ENCODE measurements at regions of chr6 and their contacts with region 1.

Region 1: GRCh38 chr6:140441256-140441655 is 1066.8 kb upstream of the CITED2 start:
- DNase-seq: peak; percentile 60 to 77 (median 73)
- ATAC-seq: peak; percentile 71 to 98 (median 96)
- H3K4me3 ChIP-seq: no peak overlapping the region
- H3K27ac ChIP-seq: peak overlapping the region in 10 of 12 donors; percentile 14 to 70 (median 36)
- H3K4me1 ChIP-seq: peaks cover 0 to 36% (median 15%) of the 10 kb centered on the region in 12 donors
- H3K27me3 ChIP-seq: no peaks in the 10 kb centered on the region
- CTCF ChIP-seq: peak; percentile 39 to 77 (median 66)
- POLR2A ChIP-seq: no peak

Region 2: DNA sequence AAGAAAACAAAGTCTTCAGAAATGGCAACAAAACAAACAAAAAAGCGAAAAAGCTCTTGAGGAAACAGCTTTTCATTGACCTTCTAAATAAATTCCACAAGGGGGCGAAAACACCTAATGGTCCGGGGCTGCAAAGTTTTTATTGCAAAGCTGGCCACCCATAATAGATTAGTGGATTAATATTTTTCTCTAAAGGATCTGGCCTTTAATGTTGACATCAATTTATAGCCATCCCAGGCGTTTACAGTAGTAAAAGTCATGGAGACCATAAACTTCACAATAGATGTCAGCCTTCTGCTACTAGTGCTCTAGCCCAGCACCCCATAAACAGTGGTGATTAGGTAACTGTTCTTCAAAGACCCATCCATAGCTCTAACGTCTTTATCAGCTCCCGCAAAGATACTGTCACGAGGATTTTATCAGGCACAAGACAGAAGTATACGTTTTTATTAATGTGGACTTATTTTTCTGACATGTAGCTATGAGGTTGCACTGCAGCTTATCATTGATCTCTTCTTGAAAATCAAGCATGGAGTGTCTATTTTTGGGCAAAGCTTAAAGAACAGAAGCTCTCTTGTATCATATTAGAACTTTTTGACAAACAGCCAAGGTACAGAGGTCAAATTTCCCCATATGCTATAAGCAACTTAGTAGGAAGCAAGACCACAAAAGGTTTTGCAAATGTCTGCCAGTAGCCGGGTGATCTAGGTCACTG is 1071.5 kb before region 1 on chr6:
- intact Hi-C with region 1: loop called (anchors 1 to 5 kb)
- DNase-seq: no peak
- ATAC-seq: no peak
- H3K4me3 ChIP-seq: peak overlapping the region in 8 of 12 donors; percentile 5 to 98 (median 92)
- H3K27ac ChIP-seq: peak overlapping the region; percentile 61 to 100 (median 97)
- H3K4me1 ChIP-seq: peaks cover 2 to 47% (median 34%) of the 10 kb centered on the region in 12 donors
- H3K27me3 ChIP-seq: no peaks in the 10 kb centered on the region
- CTCF ChIP-seq: peak; percentile 70 to 83 (median 76)
- POLR2A ChIP-seq: no peak

Region 3: DNA sequence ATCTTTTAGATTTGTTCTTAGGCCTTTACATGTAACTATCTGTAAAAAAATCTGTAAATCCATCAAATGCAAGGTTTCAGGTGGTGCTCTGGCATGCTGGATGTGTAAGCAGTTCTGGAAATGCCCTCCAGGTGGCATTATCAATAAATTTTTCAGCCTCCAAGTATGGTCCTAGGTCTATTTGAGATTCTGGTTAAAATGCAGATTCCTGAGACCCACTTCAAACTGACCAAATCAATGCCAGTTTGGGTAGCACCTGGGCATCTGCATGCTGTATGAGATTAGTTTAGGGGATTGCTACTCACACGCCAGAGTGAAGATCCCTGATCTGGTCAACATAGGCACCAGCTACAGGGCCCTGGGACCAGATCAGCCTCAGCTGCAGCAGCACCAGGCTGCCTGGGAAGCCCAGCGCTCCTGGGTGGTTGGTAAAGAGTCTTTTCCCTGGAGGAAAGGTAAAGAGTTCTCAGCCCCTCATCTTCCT is 559.5 kb before region 1 on chr6:
- intact Hi-C with region 1: loop called in 9 of 10 experiments (anchors 2 to 10 kb)
- DNase-seq: no peak
- ATAC-seq: peak; percentile 68 to 77 (median 72)
- H3K4me3 ChIP-seq: peak overlapping the region in 1 of 12 donors; percentile 4
- H3K27ac ChIP-seq: peak overlapping the region in 11 of 12 donors; percentile 55 to 87 (median 73)
- H3K4me1 ChIP-seq: peaks cover 3 to 36% (median 18%) of the 10 kb centered on the region in 12 donors
- H3K27me3 ChIP-seq: no peaks in the 10 kb centered on the region
- CTCF ChIP-seq: peak; percentile 38 to 67 (median 59)
- POLR2A ChIP-seq: no peak

Region 4: GRCh38 chr6:139973669-139974344 is 467.4 kb before region 1 on chr6:
- intact Hi-C with region 1: loop called in 3 of 10 experiments (anchors 2 to 10 kb)
- DNase-seq: no peak
- ATAC-seq: peak; percentile 86 to 94 (median 89)
- H3K4me3 ChIP-seq: no peak overlapping the region
- H3K27ac ChIP-seq: peak overlapping the region; percentile 13 to 86 (median 72)
- H3K4me1 ChIP-seq: peaks cover 0 to 27% (median 12%) of the 10 kb centered on the region in 12 donors
- H3K27me3 ChIP-seq: no peaks in the 10 kb centered on the region
- CTCF ChIP-seq: no peak
- POLR2A ChIP-seq: no peak

Region 5: GRCh38 chr6:140078561-140079125 is 362.6 kb before region 1 on chr6:
- intact Hi-C with region 1: loop called in 3 of 10 experiments (anchors 5 kb)
- DNase-seq: peak in 2 of 5 donors; percentile 23 to 43
- ATAC-seq: peak; percentile 15 to 67 (median 56)
- H3K4me3 ChIP-seq: peak overlapping the region in 4 of 12 donors; percentile 5 to 35 (median 21)
- H3K27ac ChIP-seq: peak overlapping the region; percentile 70 to 96 (median 81)
- H3K4me1 ChIP-seq: peaks cover 0 to 32% (median 22%) of the 10 kb centered on the region in 12 donors
- H3K27me3 ChIP-seq: no peaks in the 10 kb centered on the region
- CTCF ChIP-seq: no peak
- POLR2A ChIP-seq: no peak

Region 6: DNA sequence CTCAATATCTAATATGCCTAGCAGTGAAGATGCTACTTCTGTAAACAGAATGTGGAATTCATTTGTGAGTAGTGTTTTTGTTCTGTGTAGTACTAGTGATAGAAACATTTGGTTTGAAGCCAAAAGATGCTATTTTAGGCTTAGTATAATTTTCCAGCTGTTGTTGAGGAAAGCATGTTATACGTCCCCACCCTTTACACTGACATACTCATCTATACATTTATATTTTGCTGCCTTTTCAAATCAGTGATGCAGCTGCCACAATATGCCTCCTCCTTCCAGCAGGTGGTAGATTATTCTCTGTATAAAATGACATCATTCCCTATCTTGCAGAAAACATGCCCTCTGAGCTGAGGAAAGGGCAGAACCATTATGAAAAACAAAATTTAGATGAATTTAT is 473.8 kb after region 1 on chr6:
- intact Hi-C with region 1: loop called in 2 of 10 experiments (anchors 2 to 10 kb)
- DNase-seq: no peak
- ATAC-seq: peak in 2 of 4 donors; percentile 24 to 46
- H3K4me3 ChIP-seq: no peak overlapping the region
- H3K27ac ChIP-seq: peak overlapping the region in 4 of 12 donors; percentile 11 to 35 (median 26)
- H3K4me1 ChIP-seq: peaks cover 0 to 17% (median 11%) of the 10 kb centered on the region in 12 donors
- H3K27me3 ChIP-seq: no peaks in the 10 kb centered on the region
- CTCF ChIP-seq: peak in 5 of 12 donors; percentile 7 to 31 (median 19)
- POLR2A ChIP-seq: no peak

Region 7: GRCh38 chr6:141562851-141563763 is 1121.9 kb after region 1 on chr6:
- intact Hi-C with region 1: loop called in 1 of 10 experiments (anchors 10 kb)
- DNase-seq: peak in 4 of 5 donors; percentile 49 to 71 (median 58)
- ATAC-seq: peak; percentile 93 to 95 (median 94)
- H3K4me3 ChIP-seq: peak overlapping the region in 11 of 12 donors; percentile 8 to 52 (median 41)
- H3K27ac ChIP-seq: peak overlapping the region; percentile 43 to 85 (median 70)
- H3K4me1 ChIP-seq: peaks cover 0 to 18% (median 10%) of the 10 kb centered on the region in 12 donors
- H3K27me3 ChIP-seq: no peaks in the 10 kb centered on the region
- CTCF ChIP-seq: peak; percentile 82 to 95 (median 90)
- POLR2A ChIP-seq: no peak